Activated CD4-positive, alpha-beta memory T cell treated with anti-CD3 and anti-CD28 coated beads, Interleukin-2, amount 10 ng/mL, durations not matched to agents 7 days and 5 days (primary cell): ENCODE measurements at regions of chr18 and their contacts with region 1.

Region 1: DNA sequence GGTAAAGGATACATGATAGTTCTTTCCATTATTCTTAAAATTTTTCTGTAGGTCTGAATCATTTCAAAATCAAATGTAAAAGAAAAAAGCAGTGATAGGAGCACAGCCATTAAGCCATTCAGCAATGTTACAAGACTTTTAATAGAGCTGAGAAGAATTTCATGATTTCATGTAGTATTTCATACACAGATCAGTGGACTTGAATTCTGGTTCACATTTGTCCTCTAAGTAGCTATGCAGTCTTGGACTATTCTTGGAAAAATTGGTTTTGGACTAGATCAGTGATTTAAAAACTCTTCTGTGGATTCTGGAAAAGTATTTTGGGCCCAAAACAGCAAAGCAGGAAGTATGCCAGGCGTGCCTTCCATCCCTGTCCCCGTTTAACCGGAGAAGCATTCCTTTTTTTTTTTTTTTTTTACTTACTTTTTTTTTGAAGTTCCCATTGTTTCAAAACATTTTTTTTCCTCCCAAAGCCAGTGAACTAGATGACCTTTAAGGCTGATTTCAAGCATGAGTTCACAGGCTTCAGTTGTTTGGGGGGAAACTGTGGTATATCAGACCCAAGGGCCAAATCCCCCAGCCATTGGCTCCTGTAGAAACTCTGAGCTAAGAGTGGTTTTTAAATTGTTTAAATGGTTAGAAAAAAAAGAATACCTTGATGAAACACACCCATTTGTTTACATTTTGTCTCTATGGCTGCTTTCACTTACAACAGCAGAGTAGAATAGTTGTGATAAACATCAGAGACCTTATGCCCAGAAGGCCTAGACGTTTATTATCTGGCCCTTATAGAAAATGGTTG is 17.5 kb upstream of the POLI start:
- DNase-seq: no peak
- H3K4me3 Mint-ChIP-seq: no peak overlapping the region
- H3K27ac Mint-ChIP-seq: no peak overlapping the region
- H3K4me1 Mint-ChIP-seq: peaks cover 16% of the 10 kb centered on the region
- H3K27me3 Mint-ChIP-seq: peaks cover 5% of the 10 kb centered on the region

Region 2: DNA sequence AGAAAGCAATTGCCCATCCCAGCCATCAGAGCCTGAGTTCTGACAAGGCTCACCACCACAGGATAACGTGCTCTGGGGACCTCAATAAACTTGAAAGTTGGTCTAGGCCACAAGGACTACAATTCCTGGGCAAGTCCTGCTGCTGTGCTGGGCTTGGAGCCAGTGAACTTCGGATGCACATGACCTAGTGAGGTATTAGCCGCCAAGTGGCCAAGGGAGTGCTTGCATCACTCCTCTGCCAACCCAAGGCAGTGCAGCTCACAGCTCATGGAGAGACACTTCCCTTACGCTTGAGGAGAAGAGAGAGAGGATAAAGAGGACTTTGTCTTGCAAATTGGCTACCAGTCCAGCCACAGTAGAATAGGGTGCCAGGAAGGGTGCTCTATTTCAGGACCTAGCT is 247.0 kb before region 1 on chr18:
- CTCF ChIA-PET with region 1: no interaction called
- POLR2A ChIA-PET with region 1: no interaction called
- DNase-seq: no peak
- H3K4me3 Mint-ChIP-seq: no peak overlapping the region
- H3K27ac Mint-ChIP-seq: no peak overlapping the region
- H3K4me1 Mint-ChIP-seq: no peaks in the 10 kb centered on the region
- H3K27me3 Mint-ChIP-seq: no peaks in the 10 kb centered on the region

Region 3: DNA sequence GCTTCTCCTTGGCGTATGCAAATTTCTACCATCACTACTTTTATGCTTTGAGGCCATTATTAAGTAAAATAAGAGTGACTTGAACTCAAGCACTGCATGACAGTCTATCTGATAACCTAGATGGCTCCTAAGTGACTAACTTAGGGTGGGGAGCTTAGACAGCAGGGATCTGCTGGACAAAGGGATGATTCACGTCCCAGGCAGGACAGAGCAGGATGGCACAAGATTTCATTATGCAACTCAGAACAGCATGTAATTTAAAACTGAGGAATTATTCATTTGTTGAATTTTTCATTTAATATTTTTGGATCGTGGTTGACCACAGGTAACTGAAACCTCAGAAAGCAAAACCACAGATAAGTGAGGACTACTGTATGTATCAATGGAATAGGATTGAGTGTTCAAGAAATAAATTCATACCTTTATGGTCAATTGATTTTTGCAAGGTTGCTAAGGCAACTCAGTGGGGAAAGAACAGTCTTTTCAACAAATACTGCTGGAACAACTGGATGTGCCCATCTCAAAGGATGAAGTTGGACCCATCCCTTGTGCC is 142.6 kb before region 1 on chr18:
- CTCF ChIA-PET with region 1: no interaction called
- POLR2A ChIA-PET with region 1: no interaction called
- DNase-seq: no peak
- H3K4me3 Mint-ChIP-seq: no peak overlapping the region
- H3K27ac Mint-ChIP-seq: no peak overlapping the region
- H3K4me1 Mint-ChIP-seq: no peaks in the 10 kb centered on the region
- H3K27me3 Mint-ChIP-seq: peaks cover 6% of the 10 kb centered on the region

Region 4: DNA sequence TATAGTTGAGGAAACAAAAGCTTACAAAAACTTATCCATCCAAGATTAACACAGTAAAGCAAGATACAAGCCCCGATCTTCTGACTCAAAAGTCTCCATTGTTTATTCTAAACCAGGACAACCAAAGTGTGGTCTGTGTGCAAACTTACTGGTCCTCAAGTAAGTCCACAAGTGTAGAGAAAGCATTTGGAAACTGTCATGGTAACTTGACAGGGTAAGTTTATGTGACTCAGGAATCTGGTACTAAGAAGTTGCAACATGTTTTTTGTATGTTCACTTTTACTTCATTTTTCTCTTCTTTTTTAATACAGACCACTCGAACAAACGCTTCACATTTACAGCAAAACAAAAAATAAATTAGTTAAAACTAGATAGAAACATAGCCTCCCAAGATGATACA is 36.7 kb before region 1 on chr18:
- CTCF ChIA-PET with region 1: no interaction called
- POLR2A ChIA-PET with region 1: no interaction called
- DNase-seq: no peak
- H3K4me3 Mint-ChIP-seq: no peak overlapping the region
- H3K27ac Mint-ChIP-seq: no peak overlapping the region
- H3K4me1 Mint-ChIP-seq: peaks cover 47% of the 10 kb centered on the region
- H3K27me3 Mint-ChIP-seq: no peaks in the 10 kb centered on the region

Region 5: GRCh38 chr18:54278615-54279014 is 26.8 kb after region 1 on chr18:
- CTCF ChIA-PET with region 1: interaction called, 10 read pairs
- POLR2A ChIA-PET with region 1: no interaction called
- DNase-seq: no peak
- H3K4me3 Mint-ChIP-seq: no peak overlapping the region
- H3K27ac Mint-ChIP-seq: no peak overlapping the region
- H3K4me1 Mint-ChIP-seq: peaks cover 10% of the 10 kb centered on the region
- H3K27me3 Mint-ChIP-seq: no peaks in the 10 kb centered on the region